ENCODE measurements at regions of chr1 and their contacts with region 1.

Region 1: GRCh38 chr1:247494767-247495166 is 36.9 kb upstream of the OR2B11 start:
- DNase-seq: no peak
- H3K4me3 ChIP-seq: no peak overlapping the region
- CTCF ChIP-seq: no peak
- POLR2A ChIP-seq: no peak

Region 2: DNA sequence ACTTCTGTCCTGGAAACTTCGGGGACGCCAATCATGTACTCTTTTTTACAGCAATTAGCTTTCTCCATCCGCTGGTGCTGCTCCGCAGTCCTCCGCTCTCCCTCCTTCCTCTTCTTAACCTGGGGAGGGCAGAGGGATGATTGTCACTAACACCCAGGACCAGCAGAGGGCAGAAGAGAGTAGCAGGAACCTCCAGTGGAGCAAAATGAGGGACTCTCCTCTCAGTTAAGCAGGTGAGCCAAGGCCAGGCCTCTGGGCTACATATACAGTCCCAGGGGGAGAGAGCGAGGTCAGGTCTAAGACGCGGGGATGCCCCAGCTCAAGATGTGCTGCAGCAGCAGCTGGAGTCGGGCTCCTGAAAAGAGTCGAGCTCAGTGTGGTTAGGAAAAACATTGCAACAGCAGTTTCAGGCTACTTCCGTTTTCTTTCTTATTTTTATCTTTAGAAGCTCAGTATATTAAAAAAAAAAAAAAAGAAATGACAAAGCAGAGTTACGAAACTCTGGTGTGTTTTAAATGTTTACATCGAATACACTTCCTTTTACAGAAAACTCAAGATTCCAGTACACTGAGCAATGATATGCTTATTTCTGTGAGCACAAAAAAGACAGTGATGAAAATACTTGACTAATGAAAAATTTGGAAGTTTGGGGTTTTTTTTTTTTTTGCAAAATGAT is 104.5 kb before region 1 on chr1:
- intact Hi-C with region 1: loop called (anchors 10 kb)
- DNase-seq: peak; percentile 60 to 94
- H3K4me3 ChIP-seq: no peak overlapping the region
- CTCF ChIP-seq: no peak
- POLR2A ChIP-seq: no peak

Measured in lower leg skin (tissue), 4 donors.